Ascending aorta (tissue), 2 donors: ENCODE measurements at regions of chr18 and their contacts with region 1.

Region 1: DNA sequence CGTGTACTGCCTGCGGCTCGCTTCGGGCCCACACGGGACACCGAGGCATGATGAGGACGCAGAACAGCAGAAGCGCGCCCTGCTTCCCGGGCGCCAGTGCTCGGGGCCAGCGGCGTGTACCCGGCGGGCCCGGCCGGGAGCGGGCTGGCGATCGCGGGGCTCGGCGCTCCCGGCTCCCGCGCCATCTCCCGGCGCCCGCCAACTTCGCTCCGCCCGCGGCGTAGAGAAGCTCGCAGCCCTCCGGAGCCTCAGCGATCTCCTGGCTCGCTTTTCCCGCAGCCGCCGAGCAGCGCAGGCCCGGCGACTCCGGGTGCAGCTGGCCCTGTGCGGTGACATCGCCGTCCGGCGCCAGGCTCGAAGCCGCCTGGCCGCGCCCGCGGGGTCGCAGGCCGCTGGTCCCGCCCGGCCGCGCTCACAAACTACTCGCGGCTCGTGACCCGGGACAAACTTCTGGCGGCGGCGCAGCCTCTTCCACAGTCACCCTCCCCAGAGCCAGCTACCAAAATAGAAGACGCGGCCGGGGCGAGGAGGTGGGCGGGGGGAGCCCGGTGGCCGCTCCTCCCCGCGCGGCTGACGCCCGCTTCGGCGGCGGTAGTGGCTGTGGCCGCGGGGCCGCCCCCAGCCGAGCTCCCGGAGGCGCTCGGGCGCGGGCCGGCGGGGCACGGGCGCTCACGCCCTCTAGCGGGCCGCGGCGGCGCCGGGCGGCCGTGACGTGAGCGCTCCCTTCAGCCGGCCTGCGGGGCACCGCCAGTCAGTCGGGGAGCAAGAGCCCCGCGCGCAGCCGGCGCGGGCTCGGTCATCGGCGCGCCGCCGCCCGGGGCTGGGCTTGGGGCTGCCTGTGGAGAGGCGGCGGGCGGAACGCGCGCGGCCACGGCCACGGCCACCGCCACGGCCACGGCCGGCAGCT is at the start of gene PTPRM:
- DNase-seq: peak; percentile 64 to 95
- H3K4me3 ChIP-seq: peak within 1 kb of the TSS; percentile 85 to 96
- H3K27ac ChIP-seq: peak within 1 kb of the TSS; percentile 93 to 100
- H3K4me1 ChIP-seq: peaks cover 0 to 22% of the 10 kb centered on the region in 2 donors
- H3K27me3 ChIP-seq: no peaks in the 10 kb centered on the region
- CTCF ChIP-seq: peak in 1 of 3 experiments; percentile 86
- total RNA-seq, gene PTPRM: 257 TPM

Region 2: DNA sequence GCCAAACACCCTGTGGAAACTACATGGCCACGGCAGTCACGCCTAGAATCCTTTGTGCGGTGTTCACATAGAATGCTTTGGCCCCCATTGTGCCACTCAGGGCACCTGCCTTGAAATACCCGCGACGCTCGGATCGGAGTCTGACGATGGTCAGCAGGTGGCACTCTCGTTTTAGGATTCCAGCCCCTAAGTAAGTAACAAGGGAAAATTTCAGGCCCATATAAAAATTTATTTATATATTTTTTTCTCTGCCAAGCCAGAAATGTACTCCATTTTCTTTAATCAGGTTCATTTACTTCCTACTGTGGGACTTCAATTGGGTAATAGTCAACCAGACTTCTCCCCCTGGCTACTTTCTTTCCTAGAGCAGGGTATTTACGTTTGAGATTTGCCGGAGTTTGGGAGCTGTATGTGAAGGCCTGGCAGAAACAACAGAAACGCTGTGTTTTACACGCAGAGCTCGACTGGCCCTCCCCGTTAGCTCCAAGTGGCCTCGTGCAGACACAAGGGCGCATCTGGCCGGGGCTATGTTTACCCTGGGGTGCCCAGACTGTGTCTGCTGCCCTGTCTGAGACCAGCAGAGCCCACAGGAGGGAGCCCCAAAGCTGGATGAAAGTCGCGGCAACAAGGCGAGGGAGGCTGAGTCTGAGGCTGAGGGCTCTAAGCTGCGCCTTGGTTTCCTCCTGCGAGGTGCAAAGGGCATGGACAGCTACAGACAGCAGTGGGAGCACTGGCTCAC is 294.3 kb before region 1 on chr18:
- intact Hi-C with region 1: loop called (anchors 5 kb)
- DNase-seq: peak in 1 of 2 donors; percentile 72
- H3K4me3 ChIP-seq: peak overlapping the region in 1 of 2 donors; percentile 46
- H3K27ac ChIP-seq: peak overlapping the region; percentile 17 to 32
- H3K4me1 ChIP-seq: peaks cover 0 to 8% of the 10 kb centered on the region in 2 donors
- H3K27me3 ChIP-seq: no peaks in the 10 kb centered on the region
- CTCF ChIP-seq: peak; percentile 27 to 69 (median 48)

Region 3: DNA sequence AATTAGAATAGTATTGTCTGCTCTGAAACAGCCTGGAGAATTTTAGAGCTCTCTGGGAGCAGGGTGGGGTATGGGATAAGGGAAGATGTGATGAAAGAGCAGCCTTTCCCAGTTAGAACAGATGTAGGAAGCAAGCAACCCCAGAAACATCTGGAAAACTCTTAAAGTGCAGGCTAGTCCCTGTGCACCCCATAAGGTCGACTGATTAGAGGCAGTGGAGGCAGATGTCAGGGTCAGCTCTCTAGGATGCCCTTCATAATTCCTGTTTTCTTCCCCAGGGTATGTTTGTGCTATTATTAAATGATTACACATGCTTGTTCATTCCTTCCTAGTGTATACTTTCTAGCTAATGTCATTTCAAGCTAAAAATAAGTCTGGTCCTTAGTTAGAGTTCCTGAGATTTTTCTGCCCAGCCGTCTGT is 42.0 kb after region 1 on chr18:
- intact Hi-C with region 1: loop called (anchors 2 kb)
- DNase-seq: no peak
- H3K4me3 ChIP-seq: peak overlapping the region in 1 of 2 donors; percentile 3
- H3K27ac ChIP-seq: peak overlapping the region; percentile 83
- H3K4me1 ChIP-seq: peaks cover 10 to 24% of the 10 kb centered on the region in 2 donors
- H3K27me3 ChIP-seq: no peaks in the 10 kb centered on the region
- CTCF ChIP-seq: no peak

Region 4: DNA sequence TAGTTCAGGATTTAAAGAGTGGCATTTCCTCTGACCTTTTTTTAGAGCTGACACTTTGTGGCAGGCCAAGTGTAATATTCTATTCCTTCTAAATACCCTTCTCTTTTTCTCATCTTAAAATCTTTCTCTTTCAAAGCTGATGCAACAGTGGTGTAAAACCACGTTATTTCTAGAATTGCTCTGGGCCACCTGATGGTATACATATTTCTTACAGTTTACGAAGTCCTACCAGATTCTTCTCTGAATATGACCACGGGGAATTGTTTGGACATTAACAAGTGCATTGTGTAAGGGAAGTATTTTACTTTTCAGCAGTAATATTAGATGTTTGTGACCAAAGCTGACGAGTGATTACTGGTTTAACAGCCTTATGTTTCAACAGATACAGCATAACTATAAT is 110.2 kb after region 1 on chr18:
- intact Hi-C with region 1: loop called (anchors 5 kb)
- DNase-seq: no peak
- H3K4me3 ChIP-seq: no peak overlapping the region
- H3K27ac ChIP-seq: no peak overlapping the region
- H3K4me1 ChIP-seq: peaks cover 0 to 8% of the 10 kb centered on the region in 2 donors
- H3K27me3 ChIP-seq: no peaks in the 10 kb centered on the region
- CTCF ChIP-seq: no peak

Region 5: GRCh38 chr18:7755753-7756475 is 189.1 kb after region 1 on chr18:
- intact Hi-C with region 1: loop called (anchors 2 kb)
- DNase-seq: no peak
- H3K4me3 ChIP-seq: no peak overlapping the region
- H3K27ac ChIP-seq: no peak overlapping the region
- H3K4me1 ChIP-seq: peaks cover 0 to 24% of the 10 kb centered on the region in 2 donors
- H3K27me3 ChIP-seq: no peaks in the 10 kb centered on the region
- CTCF ChIP-seq: peak in 1 of 3 experiments; percentile 49

Region 6: GRCh38 chr18:7926526-7926925 is 359.7 kb after region 1 on chr18:
- intact Hi-C with region 1: loop called (anchors 10 kb)
- DNase-seq: no peak
- H3K4me3 ChIP-seq: no peak overlapping the region
- H3K27ac ChIP-seq: no peak overlapping the region
- H3K4me1 ChIP-seq: no peaks in the 10 kb centered on the region
- H3K27me3 ChIP-seq: no peaks in the 10 kb centered on the region
- CTCF ChIP-seq: no peak

Region 7: GRCh38 chr18:8011905-8012304 is 445.1 kb after region 1 on chr18:
- intact Hi-C with region 1: no loop called
- DNase-seq: no peak
- H3K4me3 ChIP-seq: no peak overlapping the region
- H3K27ac ChIP-seq: no peak overlapping the region
- H3K4me1 ChIP-seq: no peaks in the 10 kb centered on the region
- H3K27me3 ChIP-seq: no peaks in the 10 kb centered on the region
- CTCF ChIP-seq: no peak